Calu3 (cell line): ENCODE measurements at regions of chr3 and their contacts with region 1.

Region 1: GRCh38 chr3:172666873-172667694 is 43.8 kb downstream of the NCEH1 start:
- DNase-seq: peak; percentile 94
- H3K4me3 Mint-ChIP-seq: peak overlapping the region; percentile 51
- H3K27ac Mint-ChIP-seq: peak overlapping the region; percentile 73
- H3K4me1 Mint-ChIP-seq: peaks cover 51% of the 10 kb centered on the region
- H3K27me3 Mint-ChIP-seq: no peaks in the 10 kb centered on the region
- CTCF ChIP-seq: peak; percentile 99

Region 2: DNA sequence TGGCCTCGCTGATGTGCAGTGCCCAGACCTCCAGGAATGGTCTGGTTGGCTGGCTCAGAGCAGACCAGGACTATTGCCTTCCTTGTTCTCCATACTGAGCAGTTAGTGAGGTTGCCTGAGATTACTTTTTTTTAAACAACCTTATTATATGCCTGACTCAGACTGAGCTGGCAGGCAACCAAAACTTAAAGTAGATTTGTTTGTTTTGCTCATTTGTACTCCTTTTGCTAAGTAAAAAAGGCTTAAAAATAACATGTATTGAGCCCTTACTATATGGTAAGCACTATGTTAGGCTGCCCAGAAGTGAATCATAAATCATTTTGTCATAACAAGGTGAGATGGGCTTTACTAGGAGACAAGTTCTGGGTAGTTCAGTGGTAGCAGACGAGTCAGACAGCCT is 311.2 kb before region 1 on chr3:
- CTCF ChIA-PET with region 1: interaction called, 3 read pairs
- intact Hi-C with region 1: loop called (anchors 5 kb)
- DNase-seq: no peak
- H3K4me3 Mint-ChIP-seq: no peak overlapping the region
- H3K27ac Mint-ChIP-seq: peak overlapping the region; percentile 64
- H3K4me1 Mint-ChIP-seq: peaks cover 27% of the 10 kb centered on the region
- H3K27me3 Mint-ChIP-seq: no peaks in the 10 kb centered on the region
- CTCF ChIP-seq: no peak

Region 3: DNA sequence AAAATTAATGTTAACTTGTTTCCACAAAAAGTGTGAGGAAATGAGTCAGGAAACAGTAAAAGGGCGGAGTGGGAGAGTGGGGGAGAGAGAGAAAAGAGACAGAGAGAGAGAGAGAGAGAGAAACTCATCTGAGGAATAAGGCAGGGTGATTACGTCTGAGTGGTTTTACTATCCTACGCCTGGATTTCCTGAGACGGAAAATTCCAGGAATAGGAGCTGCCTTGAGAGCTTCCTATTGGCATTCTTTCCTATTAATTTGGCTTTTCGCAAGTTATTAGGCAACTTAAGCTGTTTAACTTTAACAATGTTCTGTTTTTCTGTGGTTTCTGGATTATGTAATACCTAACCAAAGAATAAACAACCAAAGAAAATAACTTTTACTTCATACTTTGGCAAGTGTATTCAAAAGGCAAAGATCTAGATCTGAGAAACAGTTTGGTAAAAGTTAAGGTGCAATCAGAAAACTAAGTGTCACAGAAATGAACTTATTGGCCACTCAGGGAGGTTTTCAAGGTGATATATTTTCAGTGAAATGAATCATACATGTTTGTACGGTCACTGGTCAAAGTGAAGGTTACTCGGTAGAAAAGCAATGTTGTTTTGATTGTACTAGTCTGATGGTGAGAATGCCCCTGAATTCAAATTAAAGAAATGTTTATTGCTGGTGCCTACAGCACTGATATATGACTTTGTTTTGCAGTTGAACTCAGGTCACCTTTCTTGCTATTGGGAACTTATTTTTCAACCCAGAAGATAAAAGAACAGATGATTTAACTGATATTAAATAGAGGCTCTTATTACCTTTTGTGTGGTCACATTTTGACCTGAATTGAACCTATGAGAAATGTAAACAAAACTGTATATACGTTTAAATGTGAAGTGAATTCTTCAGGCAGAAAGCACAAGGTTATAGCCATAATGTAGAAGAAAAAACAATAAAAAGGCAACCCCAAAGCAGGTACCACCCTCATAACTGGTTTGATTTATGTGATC is 103.9 kb before region 1 on chr3:
- CTCF ChIA-PET with region 1: interaction called, 5 read pairs
- intact Hi-C with region 1: loop called (anchors 2 kb)
- DNase-seq: peak; percentile 42
- H3K4me3 Mint-ChIP-seq: peak overlapping the region; percentile 27
- H3K27ac Mint-ChIP-seq: peak overlapping the region; percentile 69
- H3K4me1 Mint-ChIP-seq: peaks cover 44% of the 10 kb centered on the region
- H3K27me3 Mint-ChIP-seq: no peaks in the 10 kb centered on the region
- CTCF ChIP-seq: no peak

Region 4: GRCh38 chr3:172710664-172711453 is 43.8 kb after region 1 on chr3 and contains the start of gene NCEH1:
- CTCF ChIA-PET with region 1: interaction called, 27 read pairs
- intact Hi-C with region 1: no loop called
- DNase-seq: peak; percentile 97
- H3K4me3 Mint-ChIP-seq: peak within 1 kb of the TSS; percentile 96
- H3K27ac Mint-ChIP-seq: peak within 1 kb of the TSS; percentile 98
- H3K4me1 Mint-ChIP-seq: peaks cover 44% of the 10 kb centered on the region
- H3K27me3 Mint-ChIP-seq: no peaks in the 10 kb centered on the region
- CTCF ChIP-seq: peak; percentile 97
- total RNA-seq, gene NCEH1: 159 and 163 TPM in 2 replicates

Region 5: DNA sequence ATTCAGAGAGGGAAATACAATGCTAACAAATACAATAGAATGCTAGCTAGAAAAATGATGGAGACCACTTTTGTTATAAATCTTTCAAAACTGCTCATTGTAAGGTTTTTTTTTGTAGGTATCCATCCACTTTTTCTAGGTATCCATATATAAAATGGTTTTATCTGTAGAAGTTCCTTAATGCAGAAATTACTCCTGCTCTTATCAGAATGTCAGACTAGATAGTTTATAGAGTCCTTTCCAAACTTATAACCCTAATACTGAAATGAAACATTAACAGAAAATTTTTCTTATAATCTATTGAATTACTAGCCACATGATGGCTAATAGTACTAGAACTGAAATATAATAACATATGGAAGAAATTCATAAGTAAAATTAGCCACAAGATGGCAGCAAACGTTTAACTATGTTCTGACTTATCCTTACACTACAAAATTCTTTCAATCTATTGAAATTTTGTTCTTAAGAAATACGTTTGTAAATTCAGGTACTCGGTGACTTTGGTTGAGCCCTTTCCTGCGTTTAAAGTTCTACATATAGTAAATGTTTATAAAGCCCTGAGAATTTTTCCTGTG is 142.0 kb after region 1 on chr3:
- CTCF ChIA-PET with region 1: no interaction called
- intact Hi-C with region 1: no loop called
- DNase-seq: no peak
- H3K4me3 Mint-ChIP-seq: no peak overlapping the region
- H3K27ac Mint-ChIP-seq: no peak overlapping the region
- H3K4me1 Mint-ChIP-seq: no peaks in the 10 kb centered on the region
- H3K27me3 Mint-ChIP-seq: no peaks in the 10 kb centered on the region
- CTCF ChIP-seq: peak; percentile 39